GM10248 (cell line): ENCODE measurements at regions of chr1 and their contacts with region 1.

Region 1: DNA sequence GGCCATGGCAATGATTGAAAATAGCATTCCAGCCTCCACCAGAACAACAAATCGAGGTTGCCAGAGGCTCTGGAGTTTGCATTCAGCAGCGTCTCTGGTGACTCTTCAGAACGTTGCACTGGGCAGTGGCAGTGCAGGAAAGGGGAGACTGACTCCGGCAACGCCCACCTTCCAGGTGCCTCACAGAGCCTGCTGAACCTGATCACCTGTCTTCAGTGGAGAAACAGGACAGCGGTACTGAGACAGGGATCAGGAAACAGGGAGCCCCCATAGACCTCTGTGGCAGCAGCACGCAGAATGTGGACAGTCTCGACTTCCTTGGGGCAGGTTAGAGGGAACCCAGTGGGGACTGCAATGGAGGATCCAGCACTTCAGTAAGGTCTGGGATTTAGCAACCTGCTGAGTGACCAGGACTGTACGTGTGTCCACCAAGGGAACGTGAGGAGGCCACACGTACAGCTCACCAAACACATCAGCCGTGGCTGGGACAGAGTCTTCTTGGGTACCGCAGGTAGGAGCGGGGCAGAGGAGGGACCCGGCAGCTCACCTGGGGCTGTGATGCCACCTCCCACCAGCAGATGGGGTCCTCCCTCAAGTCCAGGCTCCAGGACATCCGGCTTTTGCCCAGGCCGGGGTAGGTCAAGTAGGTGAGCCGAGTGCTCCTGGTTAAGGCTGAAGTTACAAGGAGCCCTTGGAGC is 128.6 kb downstream of the PRDM2 start:
- DNase-seq: peak; percentile 77
- CTCF ChIP-seq: peak; percentile 56

Region 2: GRCh38 chr1:13813398-13814012 is 15.1 kb before region 1 on chr1:
- CTCF ChIA-PET with region 1: interaction called, 17 read pairs
- POLR2A ChIA-PET with region 1: no interaction called
- DNase-seq: peak; percentile 79
- CTCF ChIP-seq: peak; percentile 74

Region 3: GRCh38 chr1:13960375-13960987 is 131.9 kb after region 1 on chr1:
- CTCF ChIA-PET with region 1: interaction called, 19 read pairs
- POLR2A ChIA-PET with region 1: no interaction called
- DNase-seq: peak; percentile 75
- CTCF ChIP-seq: peak; percentile 96